Motor neuron (in vitro differentiated cells): ENCODE measurements at regions of chr17 and their contacts with region 1.

Region 1: GRCh38 chr17:27578718-27579085 is 52.3 kb upstream of the LGALS9 start:
- ATAC-seq: no peak
- H3K4me3 ChIP-seq: no peak overlapping the region
- H3K27ac ChIP-seq: no peak overlapping the region
- H3K4me1 ChIP-seq: peaks cover 23 to 27% of the 10 kb centered on the region in 2 donors

Region 2: GRCh38 chr17:27245230-27245696 is 333.4 kb before region 1 on chr17:
- in situ Hi-C with region 1: loop called in 4 of 9 experiments (anchors 25 kb)
- ATAC-seq: peak; percentile 85 to 100 (median 98)
- H3K4me3 ChIP-seq: no peak overlapping the region
- H3K27ac ChIP-seq: no peak overlapping the region
- H3K4me1 ChIP-seq: peaks cover 6 to 10% of the 10 kb centered on the region in 2 donors

Region 3: GRCh38 chr17:27332485-27333409 is 246.0 kb before region 1 on chr17:
- in situ Hi-C with region 1: loop called in 1 of 9 experiments (anchors 25 kb)
- ATAC-seq: peak; percentile 87 to 97 (median 90)
- H3K4me3 ChIP-seq: peak overlapping the region; percentile 20 to 40 (median 27)
- H3K27ac ChIP-seq: peak overlapping the region; percentile 78 to 89
- H3K4me1 ChIP-seq: peaks cover 11 to 21% of the 10 kb centered on the region in 2 donors

Region 4: DNA sequence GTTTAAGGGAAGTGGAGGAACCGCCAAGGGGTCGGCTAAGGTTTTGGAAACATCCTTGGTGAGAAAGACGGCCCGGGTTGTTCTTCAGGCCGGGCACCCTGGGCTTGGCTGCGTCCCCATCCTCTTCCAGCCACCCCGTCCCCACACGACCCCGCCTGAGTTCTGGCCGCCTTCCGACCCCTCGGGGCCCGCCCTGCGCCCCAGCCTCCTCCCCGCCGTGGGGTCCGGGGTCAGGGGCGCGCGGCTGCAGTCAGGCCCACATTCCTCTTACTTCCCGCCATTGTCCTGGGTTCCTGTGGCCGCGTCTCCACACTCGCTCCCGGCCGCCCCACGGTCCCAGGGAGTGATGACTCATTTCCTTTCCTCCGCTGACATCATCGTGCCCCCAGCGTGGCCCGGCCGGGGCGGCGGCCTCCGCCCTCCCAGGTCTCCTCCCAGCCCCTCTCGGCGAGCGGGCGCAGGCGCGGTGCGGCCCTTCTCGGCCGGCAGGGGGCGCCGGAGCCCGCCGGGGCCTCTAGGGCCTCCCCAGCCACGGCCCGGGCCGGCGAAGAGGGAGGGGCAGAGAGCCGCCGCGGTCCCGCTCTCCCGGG is 225.1 kb before region 1 on chr17:
- in situ Hi-C with region 1: loop called in 3 of 9 experiments (anchors 25 kb)
- ATAC-seq: peak; percentile 82 to 97 (median 94)
- H3K4me3 ChIP-seq: peak overlapping the region; percentile 37 to 57 (median 50)
- H3K27ac ChIP-seq: peak overlapping the region; percentile 83 to 92
- H3K4me1 ChIP-seq: peaks cover 7 to 9% of the 10 kb centered on the region in 2 donors

Region 5: DNA sequence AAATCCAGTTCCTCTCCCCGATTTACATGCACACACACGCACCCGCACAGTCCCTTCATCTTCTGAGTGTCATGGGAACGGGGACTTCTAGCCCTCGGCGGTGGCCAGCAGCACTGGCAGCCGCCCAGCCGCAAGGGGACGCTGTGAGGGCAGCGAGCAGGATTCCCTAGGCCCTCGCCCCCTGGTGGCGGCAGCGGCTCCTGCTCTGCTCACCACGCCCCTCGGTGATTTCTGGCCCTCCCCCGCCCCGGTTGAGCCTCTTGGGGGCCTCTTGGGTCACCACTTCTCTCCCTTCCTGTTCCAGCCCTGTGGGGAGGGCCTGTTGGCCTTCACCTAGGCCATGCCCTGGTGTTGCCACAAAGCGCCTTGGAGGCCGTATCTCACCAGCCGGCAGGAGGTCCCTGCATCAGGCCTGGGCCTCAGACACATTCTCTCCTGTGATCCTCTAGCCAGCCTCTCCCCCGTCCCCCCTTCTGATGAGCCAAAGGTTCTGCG is 197.6 kb before region 1 on chr17:
- in situ Hi-C with region 1: loop called in 1 of 9 experiments (anchors 25 kb)
- ATAC-seq: peak in 6 of 8 experiments; percentile 31 to 67 (median 48)
- H3K4me3 ChIP-seq: no peak overlapping the region
- H3K27ac ChIP-seq: peak overlapping the region in 1 of 2 donors; percentile 32
- H3K4me1 ChIP-seq: peaks cover 20% of the 10 kb centered on the region in 2 donors

Region 6: DNA sequence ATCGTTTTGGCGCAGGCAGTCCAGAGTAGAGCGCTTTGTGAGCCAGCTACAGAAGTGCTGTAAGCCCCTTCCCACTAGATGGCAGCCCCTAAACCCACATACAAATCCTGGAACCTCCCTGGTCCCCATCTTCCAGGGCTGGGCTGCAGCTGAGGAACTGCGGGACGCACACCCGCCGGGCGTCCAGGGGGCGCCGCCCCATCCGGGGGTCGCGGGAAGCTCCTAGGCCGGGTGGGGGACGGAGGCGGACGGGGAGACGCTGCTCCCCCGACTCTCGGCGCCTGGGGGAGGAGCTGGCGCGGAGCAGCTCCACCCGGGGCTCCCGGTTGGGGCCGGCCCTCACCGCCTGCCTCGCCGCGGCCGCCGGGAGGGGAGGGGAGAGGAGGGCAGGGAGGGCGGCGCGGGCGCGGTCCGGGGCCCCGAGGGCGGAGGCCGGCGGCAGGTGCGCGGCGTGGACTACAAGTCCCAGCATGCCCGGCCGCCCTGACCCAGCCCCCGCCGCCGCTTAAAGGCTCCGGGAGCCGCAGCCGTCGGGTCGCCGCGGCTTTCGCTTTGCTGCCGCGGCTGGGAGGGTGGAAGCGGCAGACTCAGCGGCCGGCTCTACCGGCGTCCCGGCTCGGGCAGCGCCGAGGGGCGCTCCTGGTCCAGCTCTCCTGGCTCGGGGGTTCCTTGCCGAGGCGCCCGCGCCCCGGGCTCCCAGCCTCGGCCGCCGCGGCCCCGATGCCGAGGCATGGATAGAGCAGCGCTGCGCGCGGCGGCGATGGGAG is 122.6 kb before region 1 on chr17 and contains the start of gene KSR1:
- in situ Hi-C with region 1: loop called in 5 of 9 experiments (anchors 25 kb)
- ATAC-seq: peak; percentile 87 to 94 (median 91)
- H3K4me3 ChIP-seq: peak within 1 kb of the TSS; percentile 84 to 95 (median 92)
- H3K27ac ChIP-seq: peak within 1 kb of the TSS; percentile 77 to 87
- H3K4me1 ChIP-seq: peaks cover 16 to 21% of the 10 kb centered on the region in 2 donors
- total RNA-seq, gene KSR1: 11.2 to 34.1 (median 17.6) TPM